Activated T-helper 2 cell treated with anti-CD3 and anti-CD28 coated beads, Interferon-gamma antibody, Interleukin-2, Interleukin-4, amounts not matched to agents 10 μg/mL and 5 μg/mL and 100 μg/mL, durations not matched to agents 14 hours and 24 hours and 36 hours (primary cell): ENCODE measurements at regions of chr13 and their contacts with region 1.

Region 1: DNA sequence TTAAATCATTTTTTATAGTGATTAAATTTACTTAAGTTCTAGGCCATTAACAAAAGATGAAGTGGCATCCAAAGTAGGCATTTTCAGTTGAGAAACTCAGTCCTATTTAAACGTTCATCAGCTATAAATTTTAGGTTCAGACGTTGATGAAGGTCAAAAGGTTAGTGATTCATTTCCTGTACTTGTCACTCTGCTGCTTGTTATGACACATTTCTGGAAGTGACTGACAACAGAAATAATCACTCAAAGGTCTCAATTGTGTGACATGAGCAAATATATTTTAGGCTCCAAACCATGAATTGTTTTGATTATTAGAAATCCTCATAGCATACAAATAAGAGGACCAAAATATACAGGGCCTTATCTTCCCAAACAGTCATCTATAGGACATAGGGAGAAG is 10.3 kb upstream of the EDNRB start:
- DNase-seq: no peak
- H3K4me3 Mint-ChIP-seq: no peak overlapping the region
- H3K27ac Mint-ChIP-seq: peak overlapping the region; percentile 79
- H3K4me1 Mint-ChIP-seq: peaks cover 16% of the 10 kb centered on the region
- H3K27me3 Mint-ChIP-seq: peaks cover 2% of the 10 kb centered on the region

Region 2: GRCh38 chr13:77874406-77874805 is 54.5 kb before region 1 on chr13:
- intact Hi-C with region 1: no loop called
- DNase-seq: no peak
- H3K4me3 Mint-ChIP-seq: no peak overlapping the region
- H3K27ac Mint-ChIP-seq: no peak overlapping the region
- H3K4me1 Mint-ChIP-seq: no peaks in the 10 kb centered on the region
- H3K27me3 Mint-ChIP-seq: no peaks in the 10 kb centered on the region

Region 3: GRCh38 chr13:77918391-77919245 is 10.3 kb before region 1 on chr13 and contains the start of gene EDNRB:
- intact Hi-C with region 1: no loop called
- DNase-seq: no peak
- H3K4me3 Mint-ChIP-seq: no peak within 1 kb of the TSS
- H3K27ac Mint-ChIP-seq: no peak within 1 kb of the TSS
- H3K4me1 Mint-ChIP-seq: peaks cover 5% of the 10 kb centered on the region
- H3K27me3 Mint-ChIP-seq: peaks cover 31% of the 10 kb centered on the region
- total RNA-seq, gene EDNRB: not detected in 2 replicates

Region 4: GRCh38 chr13:78022164-78022877 is 93.4 kb after region 1 on chr13:
- intact Hi-C with region 1: loop called (anchors 2 kb)
- DNase-seq: peak; percentile 32
- H3K4me3 Mint-ChIP-seq: no peak overlapping the region
- H3K27ac Mint-ChIP-seq: no peak overlapping the region
- H3K4me1 Mint-ChIP-seq: peaks cover 10% of the 10 kb centered on the region
- H3K27me3 Mint-ChIP-seq: no peaks in the 10 kb centered on the region